HCT116 (cell line): ENCODE measurements at regions of chr2 and their contacts with region 1.

Region 1: DNA sequence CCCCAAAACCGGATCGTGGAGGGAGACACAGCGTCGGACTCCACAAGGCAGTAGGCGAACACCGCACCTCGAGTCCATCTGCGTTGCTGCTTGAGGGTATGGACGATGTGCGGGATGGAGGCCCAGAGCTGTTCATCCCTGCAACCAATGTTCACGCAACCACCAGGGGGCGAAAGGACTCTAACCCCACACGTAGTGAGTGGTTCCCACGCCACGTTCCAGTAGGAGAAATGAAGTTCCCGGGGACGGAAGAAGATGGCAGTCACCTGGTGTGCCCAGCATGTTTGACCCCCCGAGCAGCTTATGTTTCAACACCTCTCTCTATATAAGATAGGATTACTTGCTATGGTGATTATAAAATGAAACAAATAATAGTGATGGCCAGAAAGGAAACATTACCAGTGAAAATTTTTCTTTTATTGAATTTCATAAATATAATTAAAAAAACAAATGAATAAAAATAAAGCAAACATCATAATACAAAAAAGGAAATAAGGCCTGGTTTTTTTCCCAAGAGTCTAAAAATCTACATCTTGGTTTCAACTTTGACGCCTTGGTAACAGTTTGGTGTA is 184.3 kb downstream of the SH3BP4 start:
- DNase-seq: peak; percentile 77
- ATAC-seq: peak; percentile 99
- H3K4me3 ChIP-seq: no peak overlapping the region
- H3K27ac ChIP-seq: no peak overlapping the region
- H3K4me1 ChIP-seq: no peaks in the 10 kb centered on the region
- H3K27me3 ChIP-seq: no peaks in the 10 kb centered on the region
- CTCF ChIP-seq: peak; percentile 72 to 88 (median 75)
- POLR2A ChIP-seq: no peak
- RAD21 ChIP-seq: peak; percentile 93

Region 2: DNA sequence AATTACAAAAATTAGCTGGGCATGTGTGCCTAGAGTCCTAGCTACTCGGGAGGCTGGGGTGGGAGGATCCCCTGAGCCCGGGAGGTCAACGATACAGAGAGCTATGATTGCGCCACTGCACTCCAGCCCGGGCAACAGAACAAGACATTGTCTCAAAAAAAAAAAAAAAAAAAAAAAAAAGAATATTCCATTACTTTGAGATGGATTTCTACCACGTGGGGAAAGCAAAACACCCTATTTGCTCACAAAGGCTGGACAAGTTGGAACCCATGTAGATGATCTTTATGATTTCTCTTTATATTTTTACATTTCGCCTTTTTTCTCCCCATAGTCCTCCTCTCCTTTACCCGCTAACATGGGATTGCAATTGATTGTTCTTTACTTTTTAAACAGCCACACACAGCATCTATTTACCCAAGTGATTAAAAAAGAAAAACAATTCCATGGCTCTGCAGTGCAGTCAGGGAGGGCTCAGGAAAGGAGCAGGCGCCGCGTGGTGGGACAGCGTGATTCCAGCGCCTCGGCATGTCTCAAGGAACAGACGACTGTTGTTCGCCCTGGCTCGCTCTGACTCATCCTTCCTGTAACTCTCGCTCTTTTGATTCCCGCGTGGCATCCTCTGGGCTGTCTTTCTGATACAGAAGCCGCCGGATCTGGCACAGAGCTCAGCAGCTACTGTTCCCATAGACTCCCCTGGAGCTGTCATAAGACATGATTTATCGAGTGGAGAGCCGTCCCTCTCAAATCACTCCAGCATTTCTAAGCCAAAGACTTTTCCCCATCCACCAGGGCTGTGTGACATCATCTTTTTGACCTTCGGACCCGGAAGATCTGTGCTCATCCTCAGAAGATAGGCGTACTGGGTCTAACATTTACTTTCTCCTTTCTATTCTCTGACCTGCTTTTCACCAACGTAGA is 127.4 kb after region 1 on chr2:
- CTCF ChIA-PET with region 1: interaction called, 3 read pairs
- POLR2A ChIA-PET with region 1: no interaction called
- RAD21 ChIA-PET with region 1: no interaction called
- intact Hi-C with region 1: loop called (anchors 5 kb)
- DNase-seq: peak; percentile 81
- ATAC-seq: peak; percentile 90
- H3K4me3 ChIP-seq: peak overlapping the region; percentile 36 to 55
- H3K27ac ChIP-seq: peak overlapping the region; percentile 20; the same call in 1 of the 2 replicates
- H3K4me1 ChIP-seq: peaks cover 18 to 24% of the 10 kb centered on the region in 2 experiments; a peak in 3 of 4 replicates
- H3K27me3 ChIP-seq: no peaks in the 10 kb centered on the region
- CTCF ChIP-seq: no peak
- POLR2A ChIP-seq: no peak
- RAD21 ChIP-seq: peak; percentile 30

Region 3: DNA sequence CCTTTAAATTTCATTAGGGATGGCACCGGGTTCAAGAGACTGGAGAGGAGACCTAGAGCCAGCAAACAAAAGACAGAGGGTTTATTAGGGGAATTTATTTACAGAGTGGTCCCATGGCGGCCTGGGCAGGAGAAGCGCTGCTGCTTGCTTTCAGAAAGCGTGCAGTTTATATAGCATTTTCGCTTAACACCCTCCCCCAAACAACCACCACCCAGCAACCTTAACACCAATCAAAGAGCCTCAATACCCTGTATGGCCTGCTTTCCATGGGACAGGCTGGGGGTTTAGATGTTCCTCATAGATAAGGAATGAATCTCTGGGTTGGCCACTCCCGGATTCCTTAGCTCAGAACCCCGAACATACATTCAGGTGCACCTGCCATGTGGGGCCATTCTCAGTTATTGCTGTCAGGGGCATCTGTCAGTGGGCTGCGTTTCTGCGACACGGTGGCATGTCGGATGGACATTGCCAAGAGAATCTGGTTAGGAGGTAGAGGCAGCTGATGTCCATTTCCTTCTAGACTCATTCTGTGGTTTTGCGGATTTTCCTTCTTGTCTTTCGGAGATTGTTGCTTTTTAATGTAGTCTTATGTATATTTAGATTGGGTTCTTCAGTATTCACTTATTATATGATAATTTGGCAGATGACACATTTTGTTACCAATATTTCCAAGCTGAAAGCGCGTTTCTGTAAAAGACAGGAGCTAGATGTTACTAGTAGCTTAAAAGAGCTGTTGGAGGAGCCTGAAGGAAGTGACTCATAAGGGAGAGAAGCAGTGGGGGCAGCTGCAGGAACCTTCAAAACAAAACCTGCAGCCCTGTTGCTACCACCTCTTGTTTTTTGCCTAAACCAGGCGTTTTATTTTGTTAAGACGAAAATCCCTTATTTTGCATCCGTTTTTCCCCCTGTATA is 364.9 kb after region 1 on chr2:
- CTCF ChIA-PET with region 1: no interaction called
- POLR2A ChIA-PET with region 1: no interaction called
- RAD21 ChIA-PET with region 1: no interaction called
- intact Hi-C with region 1: loop called (anchors 1 kb)
- DNase-seq: no peak
- ATAC-seq: peak; percentile 69
- H3K4me3 ChIP-seq: peak overlapping the region; percentile 8 to 37
- H3K27ac ChIP-seq: peak overlapping the region; percentile 19
- H3K4me1 ChIP-seq: peaks cover 42 to 67% of the 10 kb centered on the region in 2 experiments
- H3K27me3 ChIP-seq: no peaks in the 10 kb centered on the region
- CTCF ChIP-seq: no peak
- POLR2A ChIP-seq: no peak
- RAD21 ChIP-seq: no peak

Region 4: DNA sequence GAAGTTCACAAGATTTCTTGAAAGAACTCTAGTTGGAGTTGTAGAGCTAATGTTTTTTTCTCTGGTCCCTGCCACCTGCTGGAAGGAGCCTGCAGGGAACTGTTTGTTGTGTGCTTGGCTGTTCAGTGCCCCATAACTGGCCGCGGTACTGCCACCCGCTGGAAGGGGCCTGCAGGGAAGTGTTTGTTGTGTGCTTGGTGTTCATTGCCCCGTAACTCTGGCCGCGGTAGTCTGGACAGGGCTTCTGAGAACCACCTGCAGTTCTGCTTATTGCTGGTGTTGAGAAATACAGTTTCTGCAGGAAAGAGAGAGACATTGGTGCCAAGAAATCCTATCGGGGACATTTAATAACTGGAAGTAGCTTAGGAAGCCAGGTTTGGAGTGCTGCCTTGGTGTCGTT is 415.9 kb after region 1 on chr2:
- CTCF ChIA-PET with region 1: interaction called, 8 read pairs
- POLR2A ChIA-PET with region 1: no interaction called
- RAD21 ChIA-PET with region 1: no interaction called
- intact Hi-C with region 1: loop called (anchors 1 kb)
- DNase-seq: peak; percentile 22
- ATAC-seq: peak; percentile 98
- H3K4me3 ChIP-seq: no peak overlapping the region
- H3K27ac ChIP-seq: no peak overlapping the region
- H3K4me1 ChIP-seq: peaks cover 3 to 22% of the 10 kb centered on the region in 2 experiments; a peak in 3 of 4 replicates
- H3K27me3 ChIP-seq: no peaks in the 10 kb centered on the region
- CTCF ChIP-seq: peak; percentile 71 to 97 (median 77)
- POLR2A ChIP-seq: no peak
- RAD21 ChIP-seq: peak; percentile 73

Region 5: DNA sequence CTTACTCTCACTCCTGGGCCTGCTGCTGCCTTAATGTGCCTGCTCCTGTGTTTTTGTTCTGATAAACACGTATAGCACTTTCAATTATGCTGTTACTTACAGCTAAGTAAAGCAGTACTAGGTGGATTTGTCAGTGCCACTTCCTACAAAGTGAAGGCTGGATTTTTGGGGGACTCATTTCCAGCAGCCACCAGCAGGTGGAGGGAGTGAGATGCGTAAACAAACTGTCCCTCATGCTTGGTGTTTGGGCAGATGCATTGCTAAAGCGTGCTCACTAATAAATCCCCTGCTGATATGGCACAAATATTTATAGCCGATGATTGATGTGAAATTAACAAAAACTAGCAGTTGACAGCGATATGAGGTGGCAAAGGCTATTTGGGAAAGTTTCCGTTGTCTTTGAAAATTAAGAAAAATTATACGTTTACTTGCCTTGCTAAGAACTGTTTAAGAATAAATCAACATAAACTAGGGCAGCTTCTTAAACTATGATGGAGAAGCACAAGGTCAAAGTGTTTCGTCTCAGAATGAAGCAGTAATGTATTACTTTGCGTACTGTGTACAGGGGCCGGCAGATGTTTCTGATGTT is 459.4 kb after region 1 on chr2:
- CTCF ChIA-PET with region 1: interaction called, 20 read pairs
- POLR2A ChIA-PET with region 1: no interaction called
- RAD21 ChIA-PET with region 1: interaction called in 1 of 2 experiments, 10 read pairs
- intact Hi-C with region 1: loop called (anchors 1 kb)
- DNase-seq: peak; percentile 47
- ATAC-seq: peak; percentile 79
- H3K4me3 ChIP-seq: no peak overlapping the region
- H3K27ac ChIP-seq: no peak overlapping the region
- H3K4me1 ChIP-seq: no peaks in the 10 kb centered on the region; a peak in 2 of 4 replicates
- H3K27me3 ChIP-seq: no peaks in the 10 kb centered on the region
- CTCF ChIP-seq: peak; percentile 87 to 90 (median 89)
- POLR2A ChIP-seq: no peak
- RAD21 ChIP-seq: peak; percentile 85